Sigmoid colon (tissue), 7 donors: ENCODE measurements at regions of chr22 and their contacts with region 1.

Region 1: DNA sequence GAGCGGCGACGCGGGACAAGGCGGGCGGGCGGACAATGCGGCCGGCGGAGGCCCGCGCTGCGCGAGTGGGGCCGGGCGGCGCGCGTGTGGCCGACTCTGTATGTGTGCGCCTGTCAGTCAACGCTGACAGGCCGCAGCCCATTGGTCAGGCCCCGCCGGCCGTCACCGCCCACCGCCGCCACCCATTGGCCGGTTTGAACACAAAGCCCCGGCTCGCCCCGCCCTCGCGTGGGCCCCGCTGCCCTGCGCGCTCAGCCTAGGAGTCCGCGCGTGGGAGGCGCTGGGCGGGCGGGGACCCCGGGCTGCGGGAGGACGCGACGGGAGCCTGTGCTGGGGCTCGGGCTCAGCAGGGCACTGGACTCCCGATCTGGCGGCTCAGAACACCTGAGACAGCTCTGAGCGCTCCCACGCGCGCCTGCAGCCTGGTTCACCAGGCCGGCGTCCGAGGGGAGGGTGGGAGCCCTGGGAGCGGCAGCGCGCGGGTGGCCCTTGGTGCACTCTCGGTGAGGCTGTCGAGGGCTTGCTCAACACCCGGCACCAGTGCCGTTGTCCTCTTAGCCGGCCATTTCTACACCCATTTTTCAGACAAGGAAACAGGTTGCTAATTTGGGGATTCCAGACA is at the start of gene SUN2:
- DNase-seq: peak; percentile 97
- H3K4me3 ChIP-seq: peak within 1 kb of the TSS; percentile 68 to 87 (median 82)
- H3K27ac ChIP-seq: peak within 1 kb of the TSS; percentile 97 to 98 (median 98)
- H3K4me1 ChIP-seq: peaks cover 0 to 31% (median 19%) of the 10 kb centered on the region in 4 donors
- H3K27me3 ChIP-seq: no peaks in the 10 kb centered on the region
- CTCF ChIP-seq: no peak
- EP300 ChIP-seq: no peak
- POLR2A ChIP-seq: peak; percentile 6 to 19
- total RNA-seq, gene SUN2: 255 to 319 (median 281) TPM

Region 2: DNA sequence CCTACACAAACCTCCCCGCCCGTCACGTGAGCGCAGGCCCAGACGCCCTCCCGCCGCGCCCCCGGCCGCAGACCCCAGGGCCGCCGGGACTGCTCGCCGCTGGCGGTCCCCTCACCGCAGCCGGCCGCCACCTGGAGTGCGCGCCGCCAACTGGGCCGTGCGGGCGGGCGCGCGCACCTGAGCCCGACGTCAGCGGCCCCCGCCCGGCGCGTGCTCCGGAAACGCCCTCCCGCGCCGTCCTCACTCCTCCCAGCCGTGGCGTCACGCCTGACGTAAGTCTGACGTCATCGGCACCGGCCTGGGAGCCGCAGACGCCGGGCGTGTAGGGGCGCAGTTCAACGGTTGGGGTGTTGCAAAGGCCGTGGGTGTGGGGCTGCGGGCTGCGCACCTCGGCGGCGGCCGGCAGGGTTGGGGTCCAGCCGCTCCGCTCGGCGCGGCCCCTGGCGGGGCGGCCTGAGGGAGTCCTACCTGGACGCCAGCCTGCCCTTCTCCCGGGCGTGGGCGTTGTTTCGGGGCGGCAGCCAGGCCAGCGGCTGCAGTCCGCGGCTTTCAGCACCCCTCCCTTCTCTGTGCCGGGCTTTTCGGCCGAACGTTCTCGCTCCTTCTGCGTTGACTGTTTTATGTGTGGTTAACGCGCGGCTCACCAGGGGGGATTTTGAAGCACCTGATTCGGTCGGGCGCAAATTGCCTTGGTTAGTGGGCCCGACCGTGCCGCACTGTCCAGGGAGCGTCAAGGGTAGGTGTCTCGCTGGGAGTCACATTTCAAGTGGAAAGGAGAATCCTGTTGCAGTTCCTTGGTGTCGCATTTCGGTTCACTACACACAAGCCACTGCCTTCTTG is 55.0 kb before region 1 on chr22 and contains the start of gene JOSD1:
- intact Hi-C with region 1: loop called (anchors 2 kb)
- DNase-seq: peak; percentile 98
- H3K4me3 ChIP-seq: peak within 1 kb of the TSS; percentile 72 to 98 (median 88)
- H3K27ac ChIP-seq: peak within 1 kb of the TSS; percentile 91 to 100 (median 99)
- H3K4me1 ChIP-seq: peaks cover 0 to 56% (median 53%) of the 10 kb centered on the region in 4 donors
- H3K27me3 ChIP-seq: no peaks in the 10 kb centered on the region
- CTCF ChIP-seq: peak in 1 of 4 experiments; percentile 21
- EP300 ChIP-seq: peak in 3 of 4 donors; percentile 56 to 95 (median 91)
- POLR2A ChIP-seq: peak; percentile 70 to 82
- total RNA-seq, gene JOSD1: 34.9 to 46.0 (median 36.8) TPM

Region 3: DNA sequence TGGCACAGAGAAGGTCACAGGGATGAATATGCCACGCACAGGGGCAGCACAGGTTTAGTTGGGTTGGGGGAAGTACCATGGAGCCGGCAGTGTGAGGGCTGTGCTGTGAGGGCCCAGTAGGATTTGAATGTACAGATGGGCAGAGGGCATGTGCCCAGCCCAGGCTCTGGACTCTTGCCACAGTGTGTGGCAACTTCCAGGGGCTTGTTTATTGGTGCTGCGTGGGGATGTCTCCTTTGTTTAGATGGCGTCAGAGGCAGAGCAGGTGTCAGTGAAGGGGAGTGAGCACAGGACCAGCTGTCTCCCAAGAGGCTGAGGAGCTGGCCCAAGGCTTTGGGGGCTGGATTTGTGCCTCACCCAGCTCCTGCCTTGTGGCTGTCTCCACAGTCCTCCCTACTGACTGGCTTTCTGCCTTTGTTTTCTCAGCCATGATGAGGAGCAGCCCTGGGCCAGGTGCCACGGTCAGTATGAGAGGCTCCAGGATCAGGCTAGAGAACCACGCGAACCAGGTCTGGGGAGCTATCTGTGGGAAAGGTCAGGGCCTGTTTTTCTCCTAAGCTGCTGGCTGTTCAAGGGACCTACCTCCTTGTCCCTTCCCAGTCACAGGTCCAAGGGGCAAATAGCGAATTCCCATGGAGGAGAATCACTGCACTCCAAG is 22.2 kb before region 1 on chr22:
- intact Hi-C with region 1: loop called (anchors 2 kb)
- DNase-seq: peak; percentile 96
- H3K4me3 ChIP-seq: no peak overlapping the region
- H3K27ac ChIP-seq: peak overlapping the region; percentile 78 to 81 (median 79)
- H3K4me1 ChIP-seq: peaks cover 0 to 47% (median 38%) of the 10 kb centered on the region in 4 donors
- H3K27me3 ChIP-seq: no peaks in the 10 kb centered on the region
- CTCF ChIP-seq: no peak
- EP300 ChIP-seq: peak in 2 of 4 donors; percentile 17 to 69
- POLR2A ChIP-seq: no peak

Region 4: DNA sequence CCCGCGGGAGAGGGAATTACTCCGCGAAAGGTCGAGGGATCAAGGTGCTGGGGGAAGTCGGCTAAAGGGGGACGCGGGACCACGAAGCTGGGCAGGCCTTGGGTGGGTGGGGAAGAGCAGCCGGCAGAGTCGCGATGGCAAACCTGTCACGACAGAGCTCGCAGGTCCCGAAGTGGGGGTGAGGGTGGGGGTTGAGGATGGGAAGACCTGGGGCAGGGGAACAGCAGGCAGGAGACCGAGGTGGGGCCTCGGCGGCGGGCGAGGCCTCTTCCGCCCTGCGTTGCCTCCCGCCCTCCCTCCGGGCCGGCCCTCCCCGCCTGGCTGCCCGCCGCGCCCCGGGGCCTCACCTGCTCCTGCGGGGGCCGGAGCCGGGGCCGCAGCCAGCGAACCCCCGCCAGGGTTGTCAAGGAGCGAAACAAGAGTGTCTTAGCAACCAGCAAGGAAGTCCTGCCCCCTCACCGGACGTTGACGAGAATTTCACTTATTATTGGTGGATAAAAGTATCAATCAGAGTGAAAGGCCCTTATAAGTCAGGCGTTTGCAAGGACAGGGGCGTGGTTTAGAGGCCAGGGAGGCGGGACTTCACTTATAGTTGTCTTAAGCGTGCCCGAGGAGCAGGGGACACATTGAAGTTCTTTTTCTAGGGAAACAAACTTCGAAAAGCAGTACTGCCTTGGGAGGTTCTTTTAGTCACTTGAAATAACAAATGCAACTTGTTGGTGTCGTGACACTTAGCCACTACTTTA is 37.9 kb after region 1 on chr22 and contains the start of gene DNAL4:
- intact Hi-C with region 1: loop called (anchors 5 kb)
- DNase-seq: peak; percentile 99
- H3K4me3 ChIP-seq: peak within 1 kb of the TSS; percentile 61 to 94 (median 85)
- H3K27ac ChIP-seq: peak within 1 kb of the TSS; percentile 82 to 90 (median 84)
- H3K4me1 ChIP-seq: peaks cover 0 to 15% (median 15%) of the 10 kb centered on the region in 4 donors
- H3K27me3 ChIP-seq: no peaks in the 10 kb centered on the region
- CTCF ChIP-seq: no peak
- EP300 ChIP-seq: no peak
- POLR2A ChIP-seq: no peak
- total RNA-seq, gene DNAL4: 7.9 to 15.0 (median 11.5) TPM

Region 5: DNA sequence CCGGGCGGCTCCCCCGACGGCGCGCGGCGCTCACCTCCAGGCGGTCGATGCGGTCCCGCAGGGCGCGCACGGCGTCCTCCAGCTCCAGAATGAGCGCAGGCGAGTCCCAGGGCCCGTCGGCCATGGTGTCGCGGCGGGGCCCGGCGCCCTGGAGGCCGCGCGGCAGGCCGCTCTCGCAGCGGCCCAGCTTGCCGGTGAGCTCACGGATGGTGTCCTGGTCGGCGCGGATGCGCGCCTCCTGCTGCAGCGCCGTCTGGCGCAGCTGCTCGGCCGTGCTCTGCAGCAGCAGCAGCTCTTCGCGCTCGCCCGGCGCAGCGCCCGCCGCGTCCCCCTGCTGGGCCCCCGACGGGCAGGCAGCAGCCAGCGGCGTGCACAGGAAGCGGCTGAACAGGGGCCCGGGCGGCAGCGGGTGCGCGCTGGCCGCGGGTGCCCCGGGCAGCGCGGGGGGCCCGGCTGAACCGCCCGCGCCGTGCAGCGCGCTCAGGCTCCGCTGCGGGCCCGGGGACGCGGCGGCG is 87.2 kb after region 1 on chr22:
- intact Hi-C with region 1: loop called (anchors 5 kb)
- DNase-seq: peak; percentile 79
- H3K4me3 ChIP-seq: peak overlapping the region; percentile 31 to 56 (median 55)
- H3K27ac ChIP-seq: peak overlapping the region; percentile 75 to 83 (median 82)
- H3K4me1 ChIP-seq: peaks cover 0 to 20% (median 17%) of the 10 kb centered on the region in 4 donors
- H3K27me3 ChIP-seq: no peaks in the 10 kb centered on the region
- CTCF ChIP-seq: peak in 1 of 4 experiments; percentile 42
- EP300 ChIP-seq: no peak
- POLR2A ChIP-seq: no peak